ENCODE measurements at regions of chr11 and their contacts with region 1.

Region 1: DNA sequence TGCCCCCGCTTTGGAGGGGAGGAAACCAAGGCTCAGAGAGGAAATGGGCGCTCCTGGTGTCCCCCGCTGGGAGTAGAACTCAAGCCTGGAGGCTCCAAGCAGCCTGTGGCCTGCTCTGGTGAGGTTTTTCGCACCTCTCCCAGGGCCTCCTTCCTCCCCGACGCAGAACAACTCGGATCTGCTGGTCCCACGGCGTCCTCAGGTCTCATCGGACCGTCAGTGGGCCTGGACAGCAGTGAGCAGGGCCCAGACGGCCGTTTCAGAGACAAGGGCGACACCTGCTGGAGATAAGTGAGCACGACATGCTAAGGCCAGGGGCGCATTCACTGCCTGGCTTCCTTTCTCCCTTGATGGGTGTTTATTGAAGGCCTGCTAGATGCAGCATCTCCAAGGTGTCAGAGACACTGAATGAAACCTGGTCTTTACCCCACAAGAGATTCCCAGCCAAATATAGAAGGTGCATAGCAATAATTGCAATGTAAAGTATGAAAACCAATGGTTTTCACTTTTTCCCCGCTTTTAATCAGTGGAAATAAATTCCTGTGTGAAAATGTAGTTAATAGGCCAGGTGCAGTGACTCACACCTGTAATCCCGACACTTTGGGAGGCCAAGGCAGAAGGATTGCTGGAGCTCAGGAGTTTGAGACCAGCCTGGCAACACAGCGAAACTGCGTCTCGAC is 26.9 kb upstream of the CD82 start:
- DNase-seq: peak; percentile 78 to 88
- H3K4me3 ChIP-seq: no peak overlapping the region
- H3K27ac ChIP-seq: no peak overlapping the region
- H3K4me1 ChIP-seq: peaks cover 0 to 5% (median 2%) of the 10 kb centered on the region in 4 donors
- H3K27me3 ChIP-seq: peaks cover 0 to 11% (median 0%) of the 10 kb centered on the region in 3 donors
- CTCF ChIP-seq: peak in 6 of 7 experiments; percentile 75 to 94 (median 91)
- EP300 ChIP-seq: no peak
- POLR2A ChIP-seq: no peak

Region 2: DNA sequence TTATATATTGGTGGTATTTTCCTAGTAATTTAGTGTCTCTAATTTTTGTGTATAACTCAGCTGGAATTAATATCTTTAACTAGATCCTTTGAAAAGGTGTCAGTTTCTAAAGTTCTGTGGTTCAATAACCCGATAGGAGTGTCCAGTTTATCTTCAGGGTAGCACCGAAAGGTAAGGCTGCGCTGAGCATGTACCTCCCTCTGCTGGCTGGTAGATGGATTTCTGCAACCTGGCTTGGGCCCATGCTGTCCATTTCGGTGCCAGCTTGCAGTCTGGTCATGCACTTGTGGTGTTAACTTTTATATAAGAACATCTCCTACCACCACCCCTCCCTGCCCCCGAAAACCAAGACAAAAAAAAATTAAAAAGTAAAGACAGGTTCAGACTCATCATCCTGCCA is 418.3 kb before region 1 on chr11:
- intact Hi-C with region 1: loop called (anchors 10 kb)
- DNase-seq: no peak
- H3K4me3 ChIP-seq: no peak overlapping the region
- H3K27ac ChIP-seq: no peak overlapping the region
- H3K4me1 ChIP-seq: peaks cover 0 to 6% (median 0%) of the 10 kb centered on the region in 4 donors
- H3K27me3 ChIP-seq: no peaks in the 10 kb centered on the region
- CTCF ChIP-seq: no peak
- EP300 ChIP-seq: no peak
- POLR2A ChIP-seq: no peak

Region 3: GRCh38 chr11:44286268-44286880 is 252.1 kb before region 1 on chr11:
- intact Hi-C with region 1: loop called (anchors 5 kb)
- DNase-seq: peak; percentile 41 to 78
- H3K4me3 ChIP-seq: no peak overlapping the region
- H3K27ac ChIP-seq: no peak overlapping the region
- H3K4me1 ChIP-seq: no peaks in the 10 kb centered on the region
- H3K27me3 ChIP-seq: no peaks in the 10 kb centered on the region
- CTCF ChIP-seq: peak in 5 of 7 experiments; percentile 80 to 95 (median 87)
- EP300 ChIP-seq: no peak
- POLR2A ChIP-seq: no peak

Region 4: DNA sequence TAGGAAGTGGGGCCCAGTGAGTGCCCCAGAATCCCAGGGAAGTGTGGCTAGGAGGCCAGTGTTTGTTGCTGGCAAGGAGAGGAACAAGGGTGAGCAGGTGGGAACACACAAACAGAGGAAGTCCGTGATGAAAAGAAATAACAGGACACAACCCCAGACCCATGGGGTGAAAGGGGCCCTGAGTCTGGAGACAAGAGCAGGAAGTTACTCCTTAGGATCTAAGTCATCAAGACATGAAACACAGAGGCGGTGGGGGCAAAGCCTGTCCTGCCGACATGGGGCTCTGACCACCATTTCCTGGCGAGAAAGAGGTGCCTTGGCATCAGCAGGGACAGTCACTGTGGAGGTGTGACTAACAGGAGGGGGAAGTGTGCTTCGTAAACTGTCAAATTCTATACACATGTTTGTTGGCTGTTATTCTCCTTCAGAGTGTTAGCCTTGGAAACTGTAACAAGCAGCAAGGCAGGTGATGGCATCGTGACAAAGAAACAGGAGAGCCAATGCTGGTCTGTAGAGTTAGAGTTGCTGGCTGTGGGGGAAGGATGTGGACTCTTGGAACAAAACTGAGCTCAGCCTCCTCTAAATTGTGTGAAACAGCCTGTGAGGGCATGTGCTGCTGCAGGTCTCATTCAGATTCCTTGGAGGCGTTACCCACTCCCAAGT is 1105.2 kb after region 1 on chr11:
- intact Hi-C with region 1: no loop called
- DNase-seq: no peak
- H3K4me3 ChIP-seq: no peak overlapping the region
- H3K27ac ChIP-seq: no peak overlapping the region
- H3K4me1 ChIP-seq: no peaks in the 10 kb centered on the region
- H3K27me3 ChIP-seq: peaks cover 0 to 23% (median 0%) of the 10 kb centered on the region in 3 donors
- CTCF ChIP-seq: no peak
- EP300 ChIP-seq: no peak
- POLR2A ChIP-seq: no peak

Measured in stomach (tissue), 19 donors.